ENCODE measurements at regions of chr2 and their contacts with region 1.

Region 1: DNA sequence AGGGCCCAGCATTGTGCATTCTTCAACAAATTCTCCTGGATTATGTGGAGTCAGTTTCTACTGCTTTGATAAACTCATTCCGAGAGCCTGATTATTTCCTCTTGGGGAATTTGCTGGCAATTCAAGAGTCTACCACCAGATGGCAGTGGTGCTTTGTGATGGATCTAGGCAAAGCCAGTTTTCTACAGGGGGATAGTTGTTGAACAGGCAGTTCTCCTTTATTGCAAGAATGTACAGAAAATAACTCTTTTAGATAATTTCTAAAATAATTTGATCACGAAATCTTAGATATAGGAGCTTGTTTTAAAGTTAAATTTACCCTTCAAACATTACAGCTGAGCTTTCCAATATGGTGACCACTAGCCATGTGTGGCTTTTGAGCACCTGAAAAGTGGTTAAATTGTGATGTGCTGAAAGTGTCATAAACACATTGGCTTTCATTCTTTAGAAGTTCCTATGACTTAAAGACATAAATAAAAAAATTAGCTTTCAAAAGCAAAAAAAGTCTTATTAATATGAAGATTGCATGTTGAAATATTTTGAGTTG is 66.7 kb upstream of the HAAO start:
- DNase-seq: peak; percentile 61 to 76
- ATAC-seq: peak in 1 of 2 experiments; percentile 74; a peak in 3 of 6 replicates
- H3K4me3 ChIP-seq: no peak overlapping the region
- H3K27ac ChIP-seq: no peak overlapping the region
- H3K4me1 ChIP-seq: no peaks in the 10 kb centered on the region
- CTCF ChIP-seq: peak; percentile 98
- EP300 ChIP-seq: no peak
- POLR2A ChIP-seq: no peak
- RAD21 ChIP-seq: peak; percentile 95 to 97

Region 2: GRCh38 chr2:42685303-42685702 is 173.8 kb before region 1 on chr2:
- CTCF ChIA-PET with region 1: no interaction called
- POLR2A ChIA-PET with region 1: no interaction called
- DNase-seq: no peak
- ATAC-seq: no peak
- H3K4me3 ChIP-seq: no peak overlapping the region
- H3K27ac ChIP-seq: no peak overlapping the region
- H3K4me1 ChIP-seq: no peaks in the 10 kb centered on the region
- CTCF ChIP-seq: no peak
- EP300 ChIP-seq: no peak
- POLR2A ChIP-seq: no peak
- RAD21 ChIP-seq: no peak

Region 3: GRCh38 chr2:42696987-42697386 is 162.1 kb before region 1 on chr2:
- CTCF ChIA-PET with region 1: no interaction called
- POLR2A ChIA-PET with region 1: no interaction called
- DNase-seq: no peak
- ATAC-seq: no peak
- H3K4me3 ChIP-seq: no peak overlapping the region
- H3K27ac ChIP-seq: no peak overlapping the region
- H3K4me1 ChIP-seq: peaks cover 3% of the 10 kb centered on the region; the same call in 1 of the 3 replicates
- CTCF ChIP-seq: no peak
- EP300 ChIP-seq: no peak
- POLR2A ChIP-seq: no peak
- RAD21 ChIP-seq: no peak

Region 4: DNA sequence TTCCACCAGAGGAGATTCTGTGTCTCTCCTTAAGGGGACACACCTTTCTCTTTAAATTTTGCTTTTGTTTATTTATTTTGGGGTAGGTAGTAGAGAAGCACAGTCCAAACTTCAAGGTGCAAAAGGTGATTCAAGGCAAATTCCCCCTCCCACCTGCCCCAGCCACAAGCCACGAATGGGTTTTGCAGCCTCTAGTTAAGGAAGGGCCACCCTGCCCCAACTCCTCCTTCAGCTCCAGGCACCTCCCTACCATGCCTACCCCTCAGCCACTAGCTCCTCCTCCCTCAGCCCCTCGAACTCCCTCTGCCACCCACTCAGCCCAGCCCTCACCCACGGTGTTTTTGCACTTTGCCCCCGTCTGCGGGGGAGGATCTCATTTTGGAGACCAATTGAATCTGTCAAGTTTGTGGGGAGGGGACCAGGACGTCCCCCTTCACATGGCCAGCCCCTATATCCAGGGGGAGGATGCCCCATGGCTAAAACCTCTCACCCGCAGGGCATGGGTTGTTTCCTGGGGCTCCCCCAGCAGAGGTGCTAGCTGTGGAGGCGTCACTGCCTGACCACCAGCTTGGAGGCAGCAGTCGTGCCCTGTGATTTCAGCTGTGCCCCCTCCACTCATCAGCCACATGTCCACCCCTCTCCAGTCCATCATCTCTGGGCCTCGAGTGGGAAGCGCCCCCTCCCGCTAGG is 71.1 kb before region 1 on chr2:
- CTCF ChIA-PET with region 1: no interaction called
- POLR2A ChIA-PET with region 1: no interaction called
- DNase-seq: no peak
- ATAC-seq: no peak; a peak in 1 of 6 replicates
- H3K4me3 ChIP-seq: no peak overlapping the region
- H3K27ac ChIP-seq: no peak overlapping the region
- H3K4me1 ChIP-seq: no peaks in the 10 kb centered on the region
- CTCF ChIP-seq: no peak
- EP300 ChIP-seq: no peak
- POLR2A ChIP-seq: no peak
- RAD21 ChIP-seq: no peak

Region 5: GRCh38 chr2:42839809-42840501 is 19.1 kb before region 1 on chr2:
- CTCF ChIA-PET with region 1: interaction called, 55 read pairs
- POLR2A ChIA-PET with region 1: no interaction called
- DNase-seq: no peak
- ATAC-seq: peak in 1 of 2 experiments; percentile 12; a peak in 1 of 6 replicates
- H3K4me3 ChIP-seq: no peak overlapping the region
- H3K27ac ChIP-seq: 0 out of 6 replicates have a peak overlapping the region, but pooled peaks of 1 of the 2 experiments have one; percentile 12
- H3K4me1 ChIP-seq: peaks cover 16% of the 10 kb centered on the region
- CTCF ChIP-seq: no peak
- EP300 ChIP-seq: no peak
- POLR2A ChIP-seq: no peak
- RAD21 ChIP-seq: no peak

Region 6: DNA sequence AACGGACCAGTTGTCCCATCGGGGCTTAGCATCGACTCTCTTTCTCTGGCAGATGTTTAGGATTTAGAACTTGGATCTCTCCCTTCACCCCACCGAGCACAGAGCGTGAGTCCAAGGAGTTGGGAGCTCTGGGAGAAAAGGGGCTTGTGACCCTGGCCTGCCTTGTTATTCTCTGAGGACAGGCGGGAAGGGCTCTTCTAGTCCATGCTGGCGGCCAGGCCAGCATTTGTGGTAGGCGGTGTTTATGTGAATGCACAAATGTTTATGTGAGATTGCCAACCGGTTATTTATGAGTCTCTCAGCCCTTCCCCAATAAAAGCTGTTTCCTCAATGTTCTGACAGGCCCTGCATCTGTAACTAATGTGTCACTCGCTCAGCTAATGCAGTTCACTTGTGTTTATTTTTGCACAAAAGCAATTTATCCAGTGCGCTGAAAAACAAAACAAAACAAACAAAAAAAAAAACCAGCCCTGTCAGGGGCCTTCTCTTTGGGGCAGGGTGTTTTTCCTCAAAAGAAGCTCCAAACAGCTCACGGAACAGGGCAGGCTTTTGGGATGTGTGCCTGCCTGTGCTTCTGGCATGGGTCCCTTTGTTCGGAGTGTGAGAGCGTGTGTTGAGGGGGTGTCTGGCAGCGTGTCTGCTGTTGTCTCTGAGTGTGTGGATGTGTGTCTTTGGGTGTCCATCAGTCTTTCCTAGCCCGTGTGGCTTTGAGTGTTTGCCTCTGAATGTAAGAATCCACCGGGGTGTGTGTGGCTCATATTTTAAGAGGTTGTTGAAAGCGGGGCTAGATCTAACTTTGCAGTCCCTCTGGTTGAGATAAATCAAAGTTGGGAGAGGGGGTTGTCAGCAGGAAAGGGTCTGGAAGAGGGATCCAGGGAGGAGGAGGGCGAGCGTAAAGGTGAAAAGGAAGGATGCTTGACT is 13.9 kb before region 1 on chr2:
- CTCF ChIA-PET with region 1: interaction called, 55 read pairs
- POLR2A ChIA-PET with region 1: no interaction called
- DNase-seq: no peak
- ATAC-seq: no peak
- H3K4me3 ChIP-seq: no peak overlapping the region
- H3K27ac ChIP-seq: no peak overlapping the region
- H3K4me1 ChIP-seq: no peaks in the 10 kb centered on the region
- CTCF ChIP-seq: no peak
- EP300 ChIP-seq: no peak
- POLR2A ChIP-seq: no peak
- RAD21 ChIP-seq: no peak

Region 7: DNA sequence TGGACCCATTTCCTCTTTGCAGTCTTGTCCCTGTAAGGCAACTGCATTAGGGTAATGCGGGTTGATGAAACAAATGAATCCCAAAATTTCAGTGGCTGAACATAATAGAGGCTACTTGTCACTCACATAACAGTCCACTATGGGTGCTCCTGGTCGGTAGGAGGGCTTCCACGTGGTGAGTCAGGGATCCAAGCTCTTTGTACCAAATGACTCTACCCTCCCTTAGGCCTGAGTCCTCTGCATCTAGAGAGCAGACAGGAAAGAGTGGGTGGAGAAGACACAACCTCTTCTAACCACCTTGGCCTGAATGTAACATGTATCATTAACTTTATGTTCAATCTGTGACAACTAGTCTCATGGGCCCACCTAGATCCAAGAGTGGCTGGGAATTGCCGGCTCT is 19.5 kb after region 1 on chr2:
- CTCF ChIA-PET with region 1: interaction called, 59 read pairs
- POLR2A ChIA-PET with region 1: no interaction called
- DNase-seq: no peak
- ATAC-seq: no peak
- H3K4me3 ChIP-seq: no peak overlapping the region
- H3K27ac ChIP-seq: no peak overlapping the region
- H3K4me1 ChIP-seq: no peaks in the 10 kb centered on the region
- CTCF ChIP-seq: no peak
- EP300 ChIP-seq: no peak
- POLR2A ChIP-seq: no peak
- RAD21 ChIP-seq: no peak

Region 8: DNA sequence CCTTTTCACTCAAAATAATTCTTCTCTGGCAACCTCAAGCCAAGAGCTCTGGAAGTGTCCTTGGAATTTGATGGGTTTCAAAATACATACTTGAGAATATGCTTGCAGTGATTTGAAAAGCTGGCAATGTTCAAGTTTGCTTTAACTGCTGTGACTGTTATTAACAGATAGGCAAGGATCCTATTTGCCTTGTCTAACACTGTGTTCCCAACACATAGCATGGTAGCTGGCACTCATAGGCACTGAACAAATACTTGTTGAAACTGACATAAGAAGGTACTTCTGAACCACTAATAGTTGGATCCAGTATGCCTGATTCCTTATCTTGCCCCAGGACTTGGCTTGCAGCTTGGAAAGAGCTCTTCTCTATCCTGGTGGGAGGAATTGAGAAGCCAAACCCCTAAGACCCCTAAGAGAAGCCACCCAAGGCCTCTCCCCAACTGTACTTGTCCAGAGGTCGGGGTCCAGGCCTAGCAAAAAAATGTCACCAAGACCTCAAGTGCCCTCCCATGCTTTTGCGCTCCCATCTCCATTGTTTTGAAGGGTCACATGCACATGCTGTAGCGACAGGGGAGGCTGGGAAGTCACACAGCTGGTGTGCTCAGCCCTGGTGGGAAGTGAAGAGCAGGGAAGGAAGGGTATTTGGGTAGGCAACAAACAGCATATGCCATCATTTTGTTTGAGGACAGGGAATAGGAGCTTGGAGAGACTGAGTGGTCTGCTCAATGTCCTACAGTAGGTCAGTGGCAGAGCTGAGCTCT is 51.7 kb after region 1 on chr2:
- CTCF ChIA-PET with region 1: interaction called, 14 read pairs
- POLR2A ChIA-PET with region 1: no interaction called
- DNase-seq: no peak
- ATAC-seq: no peak
- H3K4me3 ChIP-seq: no peak overlapping the region
- H3K27ac ChIP-seq: no peak overlapping the region
- H3K4me1 ChIP-seq: peaks cover 14% of the 10 kb centered on the region
- CTCF ChIP-seq: no peak
- EP300 ChIP-seq: no peak
- POLR2A ChIP-seq: no peak
- RAD21 ChIP-seq: no peak

Measured in A549 (cell line).